Esophagus muscularis mucosa (tissue), 4 donors: ENCODE measurements at regions of chr15 and their contacts with region 1.

Region 1: DNA sequence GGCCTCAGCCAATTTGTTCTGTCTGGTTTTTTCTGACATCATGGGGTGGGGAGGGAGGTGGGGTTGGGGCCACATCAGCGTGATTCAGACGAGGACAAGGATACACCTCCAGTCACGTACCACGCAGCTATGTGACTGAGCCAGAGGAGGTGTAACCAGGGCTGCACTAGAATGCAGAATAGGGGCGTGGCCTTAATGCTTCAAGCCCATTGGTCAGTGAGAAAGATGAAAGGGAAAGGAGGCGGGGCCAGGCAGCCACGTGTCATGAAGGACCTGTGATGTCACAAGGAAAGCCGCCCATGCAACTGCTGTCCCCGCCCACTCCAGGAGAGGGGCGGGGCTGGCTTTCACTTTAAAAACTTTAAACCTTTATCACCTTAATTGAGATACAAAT is at the start of gene GOLGA6L2:
- DNase-seq: no peak
- H3K4me3 ChIP-seq: no peak within 1 kb of the TSS
- H3K27ac ChIP-seq: no peak within 1 kb of the TSS
- H3K4me1 ChIP-seq: no peaks in the 10 kb centered on the region
- H3K27me3 ChIP-seq: peaks cover 0 to 20% (median 0%) of the 10 kb centered on the region in 4 donors
- CTCF ChIP-seq: no peak
- EP300 ChIP-seq: no peak
- POLR2A ChIP-seq: no peak
- total RNA-seq, gene GOLGA6L2: not detected

Region 2: DNA sequence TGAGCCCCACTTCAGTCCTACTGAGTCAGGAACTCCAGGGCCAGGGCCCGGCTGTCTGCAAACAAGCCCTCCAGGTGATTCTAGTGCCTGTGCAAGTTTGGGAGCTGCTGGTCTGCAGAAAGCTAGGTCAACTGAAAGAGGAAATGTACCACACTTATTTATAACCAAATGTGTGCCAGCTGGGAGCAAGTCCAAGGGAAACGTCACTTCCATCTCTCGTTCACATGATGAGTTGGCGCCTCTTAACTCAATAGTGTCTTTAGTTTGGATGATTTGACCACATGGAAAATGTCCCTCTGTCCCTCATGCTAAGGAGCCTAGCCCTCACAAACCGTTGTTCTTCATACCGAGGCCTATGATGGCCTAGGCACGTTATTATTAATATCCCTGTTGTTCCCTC is 49.3 kb before region 1 on chr15:
- intact Hi-C with region 1: loop called (anchors 10 kb)
- DNase-seq: no peak
- H3K4me3 ChIP-seq: no peak overlapping the region
- H3K27ac ChIP-seq: no peak overlapping the region
- H3K4me1 ChIP-seq: no peaks in the 10 kb centered on the region
- H3K27me3 ChIP-seq: peaks cover 0 to 20% (median 0%) of the 10 kb centered on the region in 4 donors
- CTCF ChIP-seq: no peak
- EP300 ChIP-seq: no peak
- POLR2A ChIP-seq: no peak

Region 3: GRCh38 chr15:23877502-23878412 is 430.7 kb after region 1 on chr15:
- intact Hi-C with region 1: no loop called
- DNase-seq: no peak
- H3K4me3 ChIP-seq: no peak overlapping the region
- H3K27ac ChIP-seq: no peak overlapping the region
- H3K4me1 ChIP-seq: peaks cover 0 to 4% (median 0%) of the 10 kb centered on the region in 4 donors
- H3K27me3 ChIP-seq: peaks cover 0 to 19% (median 0%) of the 10 kb centered on the region in 4 donors
- CTCF ChIP-seq: peak; percentile 33 to 51 (median 43)
- EP300 ChIP-seq: no peak
- POLR2A ChIP-seq: no peak